Gastrocnemius medialis (tissue), 4 donors: ENCODE measurements at regions of chr11 and their contacts with region 1.

Region 1: DNA sequence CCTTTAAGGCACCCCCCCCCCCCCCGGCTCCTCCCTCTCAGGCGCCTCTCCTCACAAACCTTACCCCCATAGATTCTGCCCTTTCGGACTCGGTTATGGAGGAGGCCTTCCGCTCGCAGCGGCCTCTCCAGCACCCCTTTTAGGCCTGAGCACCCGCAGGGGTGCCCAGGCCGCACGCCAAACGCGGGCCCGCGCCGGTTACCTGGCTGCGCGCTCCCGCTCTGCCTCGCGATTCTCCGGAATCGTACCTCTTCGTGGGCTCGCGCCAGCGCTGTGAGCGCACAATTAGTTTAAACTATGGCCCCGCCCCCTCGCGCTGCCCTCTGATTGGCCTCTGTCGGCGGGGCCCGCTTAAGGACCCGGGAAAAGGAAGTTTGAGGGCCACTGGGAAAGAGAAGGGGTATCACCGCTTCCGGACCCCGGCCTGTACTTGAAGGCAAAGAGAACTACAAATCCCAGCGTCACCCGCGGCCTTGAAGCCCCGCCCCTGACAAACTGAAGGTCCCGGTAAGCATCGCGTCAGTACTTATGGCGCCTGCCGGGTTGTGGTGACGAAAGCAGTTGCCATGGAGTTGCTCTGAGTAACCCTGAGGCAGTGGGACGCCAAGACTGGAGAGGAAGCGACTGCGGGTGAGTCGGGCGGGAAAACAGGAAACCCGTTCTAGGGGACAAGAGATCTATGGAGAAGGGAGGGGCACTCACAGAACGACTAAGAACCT is at the starts of genes LRRC51 and NUMA1:
- DNase-seq: peak; percentile 99 to 100
- ATAC-seq: peak; percentile 96 to 98
- H3K4me3 ChIP-seq: peak within 1 kb of the TSS; percentile 69 to 96 (median 93)
- H3K27ac ChIP-seq: peak within 1 kb of the TSS; percentile 87 to 98 (median 94)
- H3K4me1 ChIP-seq: peaks cover 14 to 19% of the 10 kb centered on the region in 2 donors
- H3K27me3 ChIP-seq: no peaks in the 10 kb centered on the region
- CTCF ChIP-seq: no peak
- POLR2A ChIP-seq: peak; percentile 71 to 78
- total RNA-seq, gene LRRC51: 3.6 to 9.5 (median 5.3) TPM
- total RNA-seq, gene NUMA1: 163 to 272 (median 202) TPM

Region 2: GRCh38 chr11:71551711-71552110 is 528.7 kb before region 1 on chr11:
- in situ Hi-C with region 1: no loop called
- intact Hi-C with region 1: no loop called
- DNase-seq: no peak
- ATAC-seq: no peak
- H3K4me3 ChIP-seq: no peak overlapping the region
- H3K27ac ChIP-seq: no peak overlapping the region
- H3K4me1 ChIP-seq: no peaks in the 10 kb centered on the region
- H3K27me3 ChIP-seq: no peaks in the 10 kb centered on the region
- CTCF ChIP-seq: no peak
- POLR2A ChIP-seq: no peak

Region 3: GRCh38 chr11:71843858-71844257 is 236.6 kb before region 1 on chr11:
- in situ Hi-C with region 1: no loop called
- intact Hi-C with region 1: no loop called
- DNase-seq: no peak
- ATAC-seq: no peak
- H3K4me3 ChIP-seq: no peak overlapping the region
- H3K27ac ChIP-seq: no peak overlapping the region
- H3K4me1 ChIP-seq: no peaks in the 10 kb centered on the region
- H3K27me3 ChIP-seq: no peaks in the 10 kb centered on the region
- CTCF ChIP-seq: no peak
- POLR2A ChIP-seq: no peak

Region 4: GRCh38 chr11:71928737-71929452 is 151.5 kb before region 1 on chr11 and contains the start of gene RNF121:
- in situ Hi-C with region 1: no loop called
- intact Hi-C with region 1: loop called (anchors 1 kb)
- DNase-seq: peak; percentile 97
- ATAC-seq: peak; percentile 97
- H3K4me3 ChIP-seq: peak within 1 kb of the TSS; percentile 82 to 98 (median 90)
- H3K27ac ChIP-seq: peak within 1 kb of the TSS; percentile 84 to 93 (median 90)
- H3K4me1 ChIP-seq: peaks cover 47 to 50% of the 10 kb centered on the region in 2 donors
- H3K27me3 ChIP-seq: no peaks in the 10 kb centered on the region
- CTCF ChIP-seq: no peak
- POLR2A ChIP-seq: peak; percentile 65 to 79
- total RNA-seq, gene RNF121: 25.0 to 35.5 (median 26.7) TPM

Region 5: DNA sequence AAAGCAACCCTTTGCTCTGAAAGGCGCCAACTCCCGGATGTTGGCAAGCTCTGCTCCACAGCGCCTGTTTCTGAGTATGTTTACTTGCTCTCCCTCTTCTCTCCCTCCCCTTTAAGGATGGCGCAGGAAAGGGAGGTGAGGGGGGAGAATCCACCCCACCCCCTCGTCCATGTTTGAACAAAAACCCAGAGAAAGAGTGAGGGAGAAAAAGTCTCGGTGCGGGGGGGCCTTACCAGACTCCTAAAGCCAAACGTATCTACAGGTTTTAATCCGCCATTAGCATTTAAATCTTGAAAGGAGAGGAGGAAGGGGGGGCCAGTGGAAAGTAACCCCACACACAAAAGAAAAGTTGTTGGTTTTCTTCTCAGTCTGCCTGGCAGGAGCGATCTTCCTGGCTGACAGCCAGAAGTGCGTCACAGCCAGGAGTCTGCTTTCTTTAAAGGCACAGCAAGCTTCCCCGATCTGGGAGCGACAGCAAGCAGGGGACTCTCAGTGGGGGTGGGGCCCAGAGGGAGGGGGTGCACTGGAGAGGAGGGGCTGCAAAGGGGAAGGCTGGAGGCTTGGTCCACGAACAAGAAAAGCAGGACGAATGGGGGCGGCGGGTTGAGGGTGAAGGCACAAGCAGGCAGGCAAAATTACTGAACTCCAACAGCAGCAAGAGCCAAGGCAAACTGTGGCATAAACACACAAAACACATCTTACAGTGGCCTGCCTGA is 39.5 kb before region 1 on chr11:
- in situ Hi-C with region 1: loop called in 3 of 4 experiments (anchors 5 kb)
- intact Hi-C with region 1: loop called (anchors 1 kb)
- DNase-seq: peak; percentile 91 to 94
- ATAC-seq: peak; percentile 78 to 79
- H3K4me3 ChIP-seq: peak overlapping the region; percentile 57 to 83 (median 70)
- H3K27ac ChIP-seq: peak overlapping the region; percentile 87 to 97 (median 97)
- H3K4me1 ChIP-seq: peaks cover 40 to 50% of the 10 kb centered on the region in 2 donors
- H3K27me3 ChIP-seq: no peaks in the 10 kb centered on the region
- CTCF ChIP-seq: peak in 1 of 5 experiments; percentile 22
- POLR2A ChIP-seq: peak in 1 of 2 donors; percentile 69

Region 6: DNA sequence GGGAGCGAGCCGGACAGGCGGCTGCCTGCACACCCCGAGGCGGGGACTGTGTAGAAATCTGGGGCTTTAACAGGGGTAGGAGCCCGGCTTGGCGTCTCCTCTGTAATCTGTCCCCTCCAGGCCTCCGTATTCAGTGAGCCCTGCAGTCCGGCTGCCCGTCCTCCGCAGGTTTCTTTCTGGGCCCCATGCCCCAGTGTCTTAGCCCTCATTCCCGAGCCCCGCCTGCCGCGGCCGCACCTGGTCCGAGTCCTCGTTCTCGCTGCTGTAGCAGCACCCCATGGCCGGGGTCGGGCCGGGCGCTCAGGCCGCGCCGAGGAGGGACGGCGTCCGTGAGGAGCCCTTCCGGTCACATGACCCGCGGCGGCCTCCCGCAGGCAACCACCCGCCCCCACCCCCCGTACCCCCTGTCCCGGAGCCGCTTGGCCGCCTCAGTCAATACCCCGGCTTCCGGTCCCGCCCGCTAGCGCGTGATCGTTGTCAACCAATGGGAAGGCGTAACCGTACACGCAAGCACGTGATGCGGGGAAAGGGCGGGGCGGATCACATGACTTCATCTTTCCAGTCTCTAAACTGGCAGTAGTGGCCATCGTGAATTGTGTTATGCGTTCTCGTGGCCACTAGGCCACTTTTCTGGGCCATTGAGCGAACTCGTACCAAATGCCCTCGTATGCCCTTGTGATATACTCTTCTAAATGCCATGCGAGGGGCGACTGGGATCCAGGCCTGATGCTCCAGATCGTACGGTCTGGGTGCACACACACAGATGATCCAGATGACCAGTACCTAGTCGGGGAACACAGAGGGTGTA is 22.7 kb after region 1 on chr11 and contains the start of gene LAMTOR1:
- in situ Hi-C with region 1: no loop called
- intact Hi-C with region 1: loop called (anchors 1 kb)
- DNase-seq: peak; percentile 100
- ATAC-seq: peak; percentile 90 to 94
- H3K4me3 ChIP-seq: peak within 1 kb of the TSS; percentile 71 to 95 (median 88)
- H3K27ac ChIP-seq: peak within 1 kb of the TSS; percentile 92 to 97 (median 93)
- H3K4me1 ChIP-seq: peaks cover 46 to 49% of the 10 kb centered on the region in 2 donors
- H3K27me3 ChIP-seq: no peaks in the 10 kb centered on the region
- CTCF ChIP-seq: peak; percentile 46 to 72 (median 60)
- POLR2A ChIP-seq: peak; percentile 83 to 85
- total RNA-seq, gene LAMTOR1: 75.0 to 146 (median 104) TPM

Region 7: DNA sequence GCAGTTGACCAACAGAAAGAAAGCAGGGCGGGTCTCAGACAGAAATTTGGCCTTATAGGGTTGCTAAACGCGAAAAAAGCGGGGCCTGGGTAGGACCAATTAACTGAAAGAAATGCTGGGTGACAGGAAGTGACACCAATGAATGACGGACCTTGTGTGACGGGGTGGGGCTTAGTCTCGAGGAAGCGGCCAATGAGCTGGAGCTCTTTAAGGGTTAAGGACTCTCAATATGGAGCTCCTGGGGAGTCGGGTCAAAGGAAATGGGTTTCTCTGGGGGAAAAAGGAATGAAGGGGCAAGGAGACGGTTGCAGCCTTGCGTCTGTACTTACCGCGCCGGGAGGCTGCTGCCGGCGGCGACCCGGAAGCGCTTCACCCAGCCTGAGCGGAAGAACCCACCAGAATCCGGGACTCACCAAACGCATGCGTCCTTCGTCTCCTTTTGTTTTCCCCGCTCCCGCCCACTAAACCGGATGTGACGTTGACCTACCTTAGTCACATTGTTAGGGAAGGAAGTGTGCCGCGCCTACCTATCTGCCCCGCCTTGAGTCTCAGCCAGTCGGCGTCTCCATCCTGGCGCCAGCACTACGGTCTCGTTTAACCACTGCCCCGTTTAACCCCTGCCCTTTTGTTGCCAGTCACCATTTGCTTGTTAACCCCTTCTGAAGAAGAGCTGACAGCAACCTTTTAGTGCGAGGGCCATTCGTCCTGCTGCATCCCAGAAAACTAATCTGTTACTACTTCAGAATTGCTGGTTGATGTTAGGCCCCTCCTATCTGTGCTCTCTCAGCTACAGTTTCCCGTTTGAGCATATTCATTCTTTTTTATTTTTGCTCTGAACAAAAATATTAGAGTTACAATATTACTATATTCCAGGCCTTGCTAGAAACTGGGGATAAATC is 32.2 kb after region 1 on chr11 and contains the start of gene ANAPC15:
- in situ Hi-C with region 1: no loop called
- intact Hi-C with region 1: loop called (anchors 1 kb)
- DNase-seq: peak; percentile 98 to 99
- ATAC-seq: peak; percentile 94 to 95
- H3K4me3 ChIP-seq: peak within 1 kb of the TSS; percentile 59 to 68 (median 66)
- H3K27ac ChIP-seq: peak within 1 kb of the TSS; percentile 95 to 99 (median 98)
- H3K4me1 ChIP-seq: peaks cover 11 to 13% of the 10 kb centered on the region in 2 donors
- H3K27me3 ChIP-seq: no peaks in the 10 kb centered on the region
- CTCF ChIP-seq: no peak
- POLR2A ChIP-seq: peak; percentile 77 to 84
- total RNA-seq, gene ANAPC15: 21.2 to 39.3 (median 32.4) TPM

Region 8: GRCh38 chr11:72191961-72192381 is 111.6 kb after region 1 on chr11 and contains the start of gene FOLR1:
- in situ Hi-C with region 1: no loop called
- intact Hi-C with region 1: no loop called
- DNase-seq: no peak
- ATAC-seq: no peak
- H3K4me3 ChIP-seq: no peak within 1 kb of the TSS
- H3K27ac ChIP-seq: no peak within 1 kb of the TSS
- H3K4me1 ChIP-seq: no peaks in the 10 kb centered on the region
- H3K27me3 ChIP-seq: no peaks in the 10 kb centered on the region
- CTCF ChIP-seq: no peak
- POLR2A ChIP-seq: no peak
- total RNA-seq, gene FOLR1: not detected